ENCODE measurements at regions of chr1 and their contacts with region 1.

Region 1: DNA sequence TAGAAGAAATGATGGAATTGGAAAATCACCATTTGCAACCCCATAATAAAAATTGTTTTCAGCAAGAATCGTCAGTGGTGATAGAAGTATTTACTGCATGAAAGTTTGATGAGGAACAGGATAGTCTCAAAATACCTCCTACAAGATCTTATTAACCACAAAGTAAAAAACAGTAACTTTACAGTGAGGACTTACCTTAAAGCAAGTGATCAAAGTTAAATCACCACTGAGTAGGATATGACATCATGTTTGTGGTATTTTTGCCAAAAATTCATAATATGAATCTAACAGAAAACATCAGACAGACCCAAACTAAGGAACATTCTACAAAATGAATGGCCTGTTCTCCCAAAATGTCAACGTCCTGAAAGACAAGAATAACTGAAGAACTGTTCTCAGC is 19.9 kb downstream of the ALDH9A1 start:
- DNase-seq: no peak
- ATAC-seq: no peak
- H3K4me3 ChIP-seq: no peak overlapping the region
- H3K27ac ChIP-seq: no peak overlapping the region
- H3K4me1 ChIP-seq: peaks cover 16% of the 10 kb centered on the region
- H3K27me3 ChIP-seq: no peaks in the 10 kb centered on the region
- CTCF ChIP-seq: no peak

Region 2: GRCh38 chr1:165580941-165581871 is 97.3 kb before region 1 on chr1:
- CTCF ChIA-PET with region 1: no interaction called
- POLR2A ChIA-PET with region 1: no interaction called
- intact Hi-C with region 1: no loop called
- DNase-seq: no peak
- ATAC-seq: no peak
- H3K4me3 ChIP-seq: no peak overlapping the region
- H3K27ac ChIP-seq: no peak overlapping the region
- H3K4me1 ChIP-seq: no peaks in the 10 kb centered on the region
- H3K27me3 ChIP-seq: peaks cover 50% of the 10 kb centered on the region; the same call in 1 of the 2 replicates
- CTCF ChIP-seq: no peak

Region 3: DNA sequence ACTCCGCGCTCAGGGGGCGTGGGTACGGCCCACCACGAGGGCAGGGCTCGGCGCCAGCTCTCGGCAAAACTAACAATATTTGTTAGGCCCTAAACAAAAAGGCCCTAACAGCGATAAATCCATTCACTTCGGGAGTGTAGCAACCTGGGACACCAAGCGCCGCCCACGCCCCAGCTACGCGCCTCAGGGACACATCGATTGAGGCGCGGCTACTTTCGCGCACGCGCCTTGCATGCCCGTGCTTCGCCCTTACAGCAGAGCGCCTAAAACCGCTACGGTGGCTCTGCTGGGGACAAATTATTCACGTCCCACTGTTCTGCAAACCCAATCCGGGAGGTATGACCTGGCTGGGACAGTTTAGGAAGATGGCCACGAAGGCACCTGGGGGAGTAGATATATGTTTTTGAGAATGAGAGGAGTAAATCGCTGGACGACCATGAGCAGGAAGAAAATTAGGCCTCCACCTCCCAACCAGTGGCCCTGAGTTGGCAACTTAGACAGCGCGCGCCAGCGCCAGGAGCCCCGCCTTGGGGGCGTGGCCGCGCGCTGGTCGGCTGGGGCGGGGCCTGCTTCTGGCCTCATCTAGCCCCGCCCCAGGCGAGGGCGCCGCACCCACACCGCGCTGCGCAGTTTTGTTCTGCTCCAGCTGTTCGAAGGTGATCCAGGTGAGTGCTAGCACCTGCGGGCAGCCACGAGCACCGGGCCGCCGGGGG is 47.7 kb before region 1 on chr1 and contains the start of gene MGST3:
- CTCF ChIA-PET with region 1: no interaction called
- POLR2A ChIA-PET with region 1: no interaction called
- intact Hi-C with region 1: loop called (anchors 5 kb)
- DNase-seq: peak; percentile 97
- ATAC-seq: peak; percentile 81
- H3K4me3 ChIP-seq: peak within 1 kb of the TSS; percentile 90
- H3K27ac ChIP-seq: peak within 1 kb of the TSS; percentile 84
- H3K4me1 ChIP-seq: peaks cover 36% of the 10 kb centered on the region
- H3K27me3 ChIP-seq: no peaks in the 10 kb centered on the region
- CTCF ChIP-seq: no peak
- total RNA-seq, gene MGST3: 117 and 168 TPM in 2 replicates

Measured in PC-3 (cell line).